Naive thymus-derived CD4-positive, alpha-beta T cell (primary cell): ENCODE measurements at regions of chr15 and their contacts with region 1.

Region 1: GRCh38 chr15:56918046-56918938 is at the start of gene TCF12:
- DNase-seq: peak; percentile 86 to 96 (median 92)
- ATAC-seq: peak; percentile 92
- H3K4me3 ChIP-seq: peak within 1 kb of the TSS; percentile 91
- H3K4me3 Mint-ChIP-seq: peak within 1 kb of the TSS; percentile 82 to 94 (median 90)
- H3K27ac ChIP-seq: peak within 1 kb of the TSS; percentile 86
- H3K27ac Mint-ChIP-seq: peak within 1 kb of the TSS; percentile 73 to 91 (median 84)
- H3K4me1 ChIP-seq: peaks cover 14 to 32% of the 10 kb centered on the region in 2 donors
- H3K4me1 Mint-ChIP-seq: peaks cover 18 to 55% (median 44%) of the 10 kb centered on the region in 7 donors
- H3K27me3 ChIP-seq: no peaks in the 10 kb centered on the region
- H3K27me3 Mint-ChIP-seq: no peaks in the 10 kb centered on the region
- total RNA-seq, gene TCF12: 71.5 to 99.4 (median 84.0) TPM

Region 2: DNA sequence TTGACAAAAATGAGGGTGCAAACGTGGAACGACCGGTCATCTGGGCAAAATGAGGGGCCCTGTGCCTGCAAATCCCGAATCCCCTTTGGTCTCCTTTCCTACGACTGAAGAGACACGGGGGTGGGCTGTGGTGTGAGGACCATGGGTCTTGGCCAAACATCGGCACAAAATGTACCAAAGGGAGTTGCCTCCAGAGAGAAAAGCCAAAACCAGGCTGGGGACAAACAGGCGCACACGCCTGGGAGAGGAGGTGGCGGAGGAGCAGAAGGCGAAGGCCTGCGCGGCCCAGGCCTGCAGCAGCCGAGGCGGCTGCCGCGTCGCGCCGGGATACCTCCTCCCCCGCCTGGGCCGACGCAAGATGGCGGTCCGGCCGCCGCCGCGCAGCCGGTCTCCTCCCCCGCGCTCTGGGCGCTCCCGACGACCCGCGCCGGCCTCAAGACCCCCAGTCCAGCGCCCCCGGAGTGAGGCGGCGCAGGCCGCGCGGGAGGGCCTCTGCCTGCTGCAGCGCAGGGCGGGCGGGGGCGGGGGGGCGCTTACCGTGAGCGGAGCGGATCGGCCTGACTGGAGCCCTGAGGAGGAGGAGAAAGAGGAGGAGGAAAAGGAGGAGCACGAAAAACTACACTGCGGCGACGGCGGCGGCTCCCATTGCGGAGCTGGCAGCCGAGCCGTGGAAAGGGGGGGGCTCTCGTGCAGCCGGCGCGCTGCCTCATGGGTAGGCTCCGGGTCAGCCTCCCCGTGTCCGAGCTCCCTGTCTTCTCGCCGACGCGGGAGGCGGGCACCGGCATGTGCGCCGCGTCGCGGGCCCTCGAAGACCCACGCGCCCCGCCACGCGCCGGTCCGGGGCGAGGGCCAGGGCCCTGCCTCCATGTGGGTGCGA is 185.1 kb before region 1 on chr15 and contains the start of gene ZNF280D:
- CTCF ChIA-PET with region 1: no interaction called
- POLR2A ChIA-PET with region 1: interaction called, 3 read pairs
- intact Hi-C with region 1: loop called (anchors 1 kb)
- DNase-seq: peak; percentile 58 to 82 (median 76)
- ATAC-seq: peak; percentile 91
- H3K4me3 ChIP-seq: peak within 1 kb of the TSS; percentile 86
- H3K4me3 Mint-ChIP-seq: peak within 1 kb of the TSS; percentile 92 to 99 (median 94)
- H3K27ac ChIP-seq: peak within 1 kb of the TSS; percentile 80
- H3K27ac Mint-ChIP-seq: peak within 1 kb of the TSS; percentile 90 to 98 (median 95)
- H3K4me1 ChIP-seq: peaks cover 23 to 25% of the 10 kb centered on the region in 2 donors
- H3K4me1 Mint-ChIP-seq: peaks cover 25 to 45% (median 35%) of the 10 kb centered on the region in 7 donors
- H3K27me3 ChIP-seq: no peaks in the 10 kb centered on the region
- H3K27me3 Mint-ChIP-seq: peaks cover 0 to 2% (median 0%) of the 10 kb centered on the region in 5 donors
- total RNA-seq, gene ZNF280D: 36.9 to 59.0 (median 41.1) TPM

Region 3: DNA sequence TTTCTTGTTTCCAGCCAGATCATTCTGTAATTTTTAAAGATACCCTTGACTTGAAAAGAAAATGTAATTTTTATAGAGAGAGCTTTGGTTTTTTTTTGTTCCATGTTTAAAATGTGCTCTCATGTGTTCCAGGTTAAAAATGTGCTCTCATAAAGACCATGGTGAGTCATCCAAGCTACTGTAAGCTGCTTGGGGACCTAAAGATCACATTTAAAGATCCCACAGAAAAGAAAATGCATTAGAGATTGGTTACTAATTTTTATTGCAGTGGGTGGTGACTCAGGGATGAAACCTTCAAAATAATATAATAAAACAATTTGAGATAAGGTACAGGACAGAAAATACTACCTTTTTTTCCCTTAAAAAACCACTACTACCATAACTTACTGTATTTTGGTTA is 11.1 kb after region 1 on chr15:
- CTCF ChIA-PET with region 1: interaction called, 3 read pairs
- POLR2A ChIA-PET with region 1: interaction called, 12 read pairs
- intact Hi-C with region 1: loop called in 1 of 2 experiments (anchors 1 kb)
- DNase-seq: no peak
- ATAC-seq: no peak
- H3K4me3 ChIP-seq: no peak overlapping the region
- H3K4me3 Mint-ChIP-seq: peak overlapping the region in 1 of 10 donors; percentile 54
- H3K27ac ChIP-seq: no peak overlapping the region
- H3K27ac Mint-ChIP-seq: peak overlapping the region in 2 of 9 donors; percentile 37 to 48
- H3K4me1 ChIP-seq: peaks cover 6 to 24% of the 10 kb centered on the region in 2 donors
- H3K4me1 Mint-ChIP-seq: peaks cover 38 to 90% (median 83%) of the 10 kb centered on the region in 7 donors
- H3K27me3 ChIP-seq: no peaks in the 10 kb centered on the region
- H3K27me3 Mint-ChIP-seq: no peaks in the 10 kb centered on the region

Region 4: GRCh38 chr15:57138349-57138788 is 220.1 kb after region 1 on chr15:
- CTCF ChIA-PET with region 1: interaction called, 3 read pairs
- POLR2A ChIA-PET with region 1: no interaction called
- intact Hi-C with region 1: loop called in 1 of 2 experiments (anchors 5 kb)
- DNase-seq: peak in 1 of 9 donors; percentile 10
- ATAC-seq: no peak
- H3K4me3 ChIP-seq: no peak overlapping the region
- H3K4me3 Mint-ChIP-seq: no peak overlapping the region
- H3K27ac ChIP-seq: no peak overlapping the region
- H3K27ac Mint-ChIP-seq: no peak overlapping the region
- H3K4me1 ChIP-seq: no peaks in the 10 kb centered on the region
- H3K4me1 Mint-ChIP-seq: peaks cover 17 to 44% (median 31%) of the 10 kb centered on the region in 7 donors
- H3K27me3 ChIP-seq: no peaks in the 10 kb centered on the region
- H3K27me3 Mint-ChIP-seq: no peaks in the 10 kb centered on the region

Region 5: DNA sequence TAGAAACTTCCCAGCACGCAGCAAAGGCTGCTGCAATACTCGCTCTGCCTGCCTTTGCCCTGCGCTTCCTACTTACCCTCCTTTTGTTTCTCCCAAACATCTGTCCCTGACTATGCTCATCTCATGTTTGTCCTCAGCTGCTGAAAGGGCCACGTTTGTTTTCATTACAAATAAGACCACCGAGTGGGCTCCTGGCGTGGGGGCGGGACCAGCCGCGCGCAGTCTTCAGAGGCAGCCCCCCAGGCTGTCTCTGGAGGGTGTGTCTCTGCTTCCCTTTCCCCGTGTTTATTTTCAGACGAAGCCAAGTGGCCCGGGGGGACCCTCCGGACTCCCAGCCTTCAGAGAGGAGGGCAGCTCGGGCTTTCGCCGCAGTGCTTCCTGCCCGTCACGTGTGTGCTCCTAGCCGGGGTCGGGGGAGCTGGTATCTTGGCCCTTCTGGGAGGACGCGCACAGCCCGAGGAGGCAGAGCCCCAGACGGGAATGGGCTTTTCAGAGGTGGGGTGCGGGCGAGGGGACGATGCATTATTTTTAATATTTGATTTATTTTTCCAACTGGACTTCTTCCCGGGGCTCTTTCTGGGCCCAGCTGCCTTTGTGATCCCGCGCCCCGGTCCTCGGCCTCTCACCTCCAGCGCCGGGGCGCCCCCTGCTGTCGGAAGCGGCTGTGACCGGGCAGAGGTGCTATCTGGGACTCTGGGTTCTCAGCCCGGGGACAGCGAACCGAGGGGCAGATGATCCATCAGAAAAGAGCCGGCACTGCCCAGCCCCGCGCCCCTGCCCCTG is 388.1 kb after region 1 on chr15:
- CTCF ChIA-PET with region 1: interaction called, 3 read pairs
- POLR2A ChIA-PET with region 1: no interaction called
- intact Hi-C with region 1: loop called (anchors 1 kb)
- DNase-seq: peak; percentile 51 to 92 (median 80)
- ATAC-seq: peak; percentile 85
- H3K4me3 ChIP-seq: peak overlapping the region; percentile 52
- H3K4me3 Mint-ChIP-seq: peak overlapping the region; percentile 15 to 71 (median 60)
- H3K27ac ChIP-seq: no peak overlapping the region
- H3K27ac Mint-ChIP-seq: peak overlapping the region in 1 of 9 donors; percentile 78
- H3K4me1 ChIP-seq: peaks cover 4 to 5% of the 10 kb centered on the region in 2 donors
- H3K4me1 Mint-ChIP-seq: peaks cover 0 to 9% (median 5%) of the 10 kb centered on the region in 7 donors
- H3K27me3 ChIP-seq: no peaks in the 10 kb centered on the region
- H3K27me3 Mint-ChIP-seq: peaks cover 0 to 14% (median 3%) of the 10 kb centered on the region in 5 donors

Region 6: GRCh38 chr15:57327985-57328471 is 409.7 kb after region 1 on chr15:
- CTCF ChIA-PET with region 1: no interaction called
- POLR2A ChIA-PET with region 1: no interaction called
- intact Hi-C with region 1: no loop called
- DNase-seq: no peak
- ATAC-seq: no peak
- H3K4me3 ChIP-seq: no peak overlapping the region
- H3K4me3 Mint-ChIP-seq: no peak overlapping the region
- H3K27ac ChIP-seq: no peak overlapping the region
- H3K27ac Mint-ChIP-seq: no peak overlapping the region
- H3K4me1 ChIP-seq: no peaks in the 10 kb centered on the region
- H3K4me1 Mint-ChIP-seq: peaks cover 0 to 12% (median 5%) of the 10 kb centered on the region in 7 donors
- H3K27me3 ChIP-seq: no peaks in the 10 kb centered on the region
- H3K27me3 Mint-ChIP-seq: peaks cover 4 to 16% (median 14%) of the 10 kb centered on the region in 5 donors